Activated CD8-positive, alpha-beta memory T cell treated with anti-CD3 and anti-CD28 coated beads, Interleukin-2, amount 10 ng/mL, durations not matched to agents 7 days and 5 days (primary cell): ENCODE measurements at regions of chr12 and their contacts with region 1.

Region 1: GRCh38 chr12:14454098-14454907 is 88.8 kb downstream of the ATF7IP start:
- DNase-seq: peak; percentile 70
- ATAC-seq: peak; percentile 89
- H3K4me3 Mint-ChIP-seq: peak overlapping the region; percentile 63
- H3K27ac Mint-ChIP-seq: peak overlapping the region; percentile 88
- H3K4me1 Mint-ChIP-seq: peaks cover 54% of the 10 kb centered on the region
- H3K27me3 Mint-ChIP-seq: no peaks in the 10 kb centered on the region

Region 2: DNA sequence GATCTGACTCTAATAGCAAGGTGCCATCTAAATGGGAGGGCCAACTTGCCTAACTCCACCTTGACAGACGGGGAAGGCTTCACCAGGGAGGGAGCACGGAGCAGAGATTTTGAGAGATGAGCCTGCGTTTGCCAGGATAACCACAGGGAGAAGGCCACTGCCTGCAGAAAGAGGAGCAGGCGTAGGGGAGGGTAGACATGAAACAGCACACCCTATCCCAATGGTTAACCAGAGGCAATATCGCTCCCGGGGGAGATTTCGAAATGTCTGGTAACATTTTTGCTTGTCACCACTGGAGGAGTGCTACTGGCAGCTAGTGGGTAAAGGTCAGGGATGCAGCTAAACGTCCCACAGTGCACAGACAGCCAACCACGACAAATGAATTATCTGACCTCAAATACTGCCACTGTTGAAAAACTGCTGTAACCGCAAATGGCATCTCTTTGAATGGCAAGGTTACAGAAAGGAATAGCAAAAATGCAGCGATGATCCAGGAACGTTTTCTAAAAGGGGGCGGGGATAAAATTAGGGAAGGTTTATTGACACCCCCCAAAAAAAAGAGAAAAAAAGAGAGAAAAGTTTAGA is 214.9 kb before region 1 on chr12:
- CTCF ChIA-PET with region 1: interaction called, 42 read pairs
- DNase-seq: peak; percentile 50
- ATAC-seq: peak; percentile 59
- H3K4me3 Mint-ChIP-seq: peak overlapping the region; percentile 66
- H3K27ac Mint-ChIP-seq: peak overlapping the region; percentile 78
- H3K4me1 Mint-ChIP-seq: peaks cover 22% of the 10 kb centered on the region
- H3K27me3 Mint-ChIP-seq: no peaks in the 10 kb centered on the region

Region 3: DNA sequence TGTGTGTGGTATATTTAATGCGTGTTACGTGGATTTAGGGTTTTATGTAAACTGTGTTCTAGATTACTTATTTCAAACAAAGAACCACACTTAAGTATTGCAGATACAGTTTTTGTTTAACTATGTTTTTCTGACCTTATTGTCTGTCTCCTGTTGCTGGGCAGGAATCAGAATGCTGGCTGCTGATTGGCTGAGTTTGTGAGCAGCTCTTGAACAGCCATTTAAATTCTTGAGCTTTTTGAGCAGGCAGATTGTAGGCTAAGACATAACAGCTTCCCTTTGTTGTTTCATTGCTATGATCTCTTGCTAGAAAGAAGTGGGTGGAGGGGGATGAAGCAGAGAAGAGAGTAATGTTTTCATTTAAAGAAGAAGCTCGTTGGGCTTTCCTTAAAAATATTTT is 36.6 kb before region 1 on chr12:
- CTCF ChIA-PET with region 1: interaction called, 10 read pairs
- DNase-seq: peak; percentile 92
- ATAC-seq: peak; percentile 62
- H3K4me3 Mint-ChIP-seq: peak overlapping the region; percentile 69
- H3K27ac Mint-ChIP-seq: peak overlapping the region; percentile 93
- H3K4me1 Mint-ChIP-seq: peaks cover 57% of the 10 kb centered on the region
- H3K27me3 Mint-ChIP-seq: no peaks in the 10 kb centered on the region

Region 4: DNA sequence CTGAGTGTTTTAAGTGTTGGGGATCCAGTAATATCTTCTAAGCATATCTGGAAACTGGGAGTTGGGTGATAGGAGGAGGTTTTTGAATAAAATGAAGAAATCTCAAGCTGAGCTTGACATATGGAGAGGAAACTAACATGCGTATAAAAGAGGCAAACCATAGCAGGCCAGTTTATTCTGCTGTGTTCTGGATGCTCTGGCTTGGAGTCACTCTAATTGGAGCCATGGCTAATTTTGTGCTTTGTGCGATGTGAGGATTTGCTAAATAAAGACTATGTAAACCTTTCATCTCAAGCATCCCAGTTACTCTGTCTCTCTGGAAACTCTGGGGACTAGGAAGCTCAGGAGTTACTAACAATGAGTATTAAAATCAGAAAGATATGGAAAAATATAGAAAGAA is 22.3 kb before region 1 on chr12:
- CTCF ChIA-PET with region 1: interaction called, 18 read pairs
- DNase-seq: no peak
- ATAC-seq: no peak
- H3K4me3 Mint-ChIP-seq: no peak overlapping the region
- H3K27ac Mint-ChIP-seq: no peak overlapping the region
- H3K4me1 Mint-ChIP-seq: peaks cover 38% of the 10 kb centered on the region
- H3K27me3 Mint-ChIP-seq: no peaks in the 10 kb centered on the region

Region 5: GRCh38 chr12:14471497-14471896 is 17.2 kb after region 1 on chr12:
- CTCF ChIA-PET with region 1: interaction called, 10 read pairs
- DNase-seq: no peak
- ATAC-seq: no peak
- H3K4me3 Mint-ChIP-seq: no peak overlapping the region
- H3K27ac Mint-ChIP-seq: peak overlapping the region; percentile 70
- H3K4me1 Mint-ChIP-seq: no peaks in the 10 kb centered on the region
- H3K27me3 Mint-ChIP-seq: no peaks in the 10 kb centered on the region